Psoas muscle (tissue), 8 donors: ENCODE measurements at regions of chr1 and their contacts with region 1.

Region 1: DNA sequence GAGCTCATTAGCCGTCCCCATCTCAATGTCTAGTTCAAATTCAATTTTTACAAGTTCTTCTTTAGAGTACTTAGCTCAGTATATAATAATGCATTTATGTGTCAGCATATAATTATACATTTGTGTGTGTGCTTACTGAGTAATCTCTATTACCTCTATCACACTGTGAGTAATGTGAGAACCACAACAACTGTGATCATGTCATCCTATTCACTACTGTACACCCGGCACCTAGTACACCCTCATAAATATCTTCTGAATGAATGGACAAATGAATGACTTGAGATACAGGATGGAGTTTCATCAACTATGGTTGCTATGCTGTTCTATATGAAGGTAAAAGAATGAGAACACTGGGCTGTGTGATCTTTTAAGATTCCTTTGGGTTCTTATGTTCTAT is 124.0 kb downstream of the GPATCH2 start:
- DNase-seq: no peak
- ATAC-seq: no peak
- H3K4me3 ChIP-seq: no peak overlapping the region
- H3K27ac ChIP-seq: no peak overlapping the region
- H3K4me1 ChIP-seq: no peaks in the 10 kb centered on the region
- H3K27me3 ChIP-seq: no peaks in the 10 kb centered on the region
- CTCF ChIP-seq: no peak

Region 2: DNA sequence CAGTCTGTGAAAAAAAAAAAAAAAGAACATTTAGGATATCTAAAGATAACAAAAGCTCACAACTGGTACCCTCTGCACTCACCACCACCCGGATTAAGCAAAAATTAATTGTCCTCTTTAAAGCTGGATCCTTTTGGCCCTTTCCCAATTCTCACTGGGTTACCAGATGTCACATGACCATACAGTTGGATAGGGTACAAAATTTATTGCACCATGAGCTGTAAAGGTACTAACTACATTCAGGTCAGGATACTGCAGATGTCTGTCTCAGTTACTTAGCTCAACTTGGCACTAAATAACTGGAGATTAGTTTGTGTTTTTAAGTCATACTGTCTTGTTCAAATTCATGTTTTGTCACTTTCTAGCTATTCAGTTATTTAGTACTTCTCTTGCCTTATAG is 27.7 kb after region 1 on chr1:
- intact Hi-C with region 1: loop called in 1 of 2 experiments (anchors 2 kb)
- DNase-seq: no peak
- ATAC-seq: no peak
- H3K4me3 ChIP-seq: no peak overlapping the region
- H3K27ac ChIP-seq: no peak overlapping the region
- H3K4me1 ChIP-seq: no peaks in the 10 kb centered on the region
- H3K27me3 ChIP-seq: no peaks in the 10 kb centered on the region
- CTCF ChIP-seq: no peak

Region 3: GRCh38 chr1:217687509-217687908 is 180.6 kb after region 1 on chr1:
- intact Hi-C with region 1: no loop called
- DNase-seq: no peak
- ATAC-seq: no peak
- H3K4me3 ChIP-seq: no peak overlapping the region
- H3K27ac ChIP-seq: no peak overlapping the region
- H3K4me1 ChIP-seq: no peaks in the 10 kb centered on the region
- H3K27me3 ChIP-seq: no peaks in the 10 kb centered on the region
- CTCF ChIP-seq: no peak